WTC11 (cell line): ENCODE measurements at regions of chr14 and their contacts with region 1.

Region 1: GRCh38 chr14:75982266-75983018 is 647 bp upstream of the TGFB3 start:
- DNase-seq: peak; percentile 87
- ATAC-seq: peak; percentile 65
- H3K4me3 Mint-ChIP-seq: peak overlapping the region; percentile 84
- H3K27ac Mint-ChIP-seq: no peak overlapping the region
- H3K4me1 Mint-ChIP-seq: peaks cover 42% of the 10 kb centered on the region
- H3K27me3 Mint-ChIP-seq: peaks cover 39% of the 10 kb centered on the region
- CTCF ChIP-seq: peak; percentile 34; the same call in 1 of the 2 replicates

Region 2: GRCh38 chr14:75660630-75661494 is 321.6 kb before region 1 on chr14 and contains the starts of genes ERG28 and TTLL5:
- CTCF ChIA-PET with region 1: interaction called, 12 read pairs
- POLR2A ChIA-PET with region 1: no interaction called
- DNase-seq: peak; percentile 97
- ATAC-seq: peak; percentile 96
- H3K4me3 Mint-ChIP-seq: peak within 1 kb of the TSS; percentile 92
- H3K27ac Mint-ChIP-seq: peak within 1 kb of the TSS; percentile 95
- H3K4me1 Mint-ChIP-seq: peaks cover 17% of the 10 kb centered on the region
- H3K27me3 Mint-ChIP-seq: no peaks in the 10 kb centered on the region
- CTCF ChIP-seq: no peak
- total RNA-seq, gene ERG28: 27.9 to 29.9 TPM (median 29.4 TPM) in 3 replicates
- total RNA-seq, gene TTLL5: 39.6 to 42.6 TPM (median 40.8 TPM) in 3 replicates

Region 3: GRCh38 chr14:75800792-75801191 is 181.7 kb before region 1 on chr14:
- CTCF ChIA-PET with region 1: interaction called, 28 read pairs
- POLR2A ChIA-PET with region 1: no interaction called
- DNase-seq: peak; percentile 64
- ATAC-seq: peak; percentile 95
- H3K4me3 Mint-ChIP-seq: no peak overlapping the region
- H3K27ac Mint-ChIP-seq: no peak overlapping the region
- H3K4me1 Mint-ChIP-seq: peaks cover 12% of the 10 kb centered on the region
- H3K27me3 Mint-ChIP-seq: no peaks in the 10 kb centered on the region
- CTCF ChIP-seq: 0 out of 2 replicates have a peak, but pooled peaks have one; percentile 21

Region 4: GRCh38 chr14:75884198-75884611 is 98.2 kb before region 1 on chr14:
- CTCF ChIA-PET with region 1: interaction called, 12 read pairs
- POLR2A ChIA-PET with region 1: no interaction called
- DNase-seq: no peak
- ATAC-seq: peak; percentile 69
- H3K4me3 Mint-ChIP-seq: no peak overlapping the region
- H3K27ac Mint-ChIP-seq: 0 out of 2 replicates have a peak overlapping the region, but pooled peaks have one; percentile 35
- H3K4me1 Mint-ChIP-seq: peaks cover 21% of the 10 kb centered on the region
- H3K27me3 Mint-ChIP-seq: no peaks in the 10 kb centered on the region
- CTCF ChIP-seq: no peak

Region 5: DNA sequence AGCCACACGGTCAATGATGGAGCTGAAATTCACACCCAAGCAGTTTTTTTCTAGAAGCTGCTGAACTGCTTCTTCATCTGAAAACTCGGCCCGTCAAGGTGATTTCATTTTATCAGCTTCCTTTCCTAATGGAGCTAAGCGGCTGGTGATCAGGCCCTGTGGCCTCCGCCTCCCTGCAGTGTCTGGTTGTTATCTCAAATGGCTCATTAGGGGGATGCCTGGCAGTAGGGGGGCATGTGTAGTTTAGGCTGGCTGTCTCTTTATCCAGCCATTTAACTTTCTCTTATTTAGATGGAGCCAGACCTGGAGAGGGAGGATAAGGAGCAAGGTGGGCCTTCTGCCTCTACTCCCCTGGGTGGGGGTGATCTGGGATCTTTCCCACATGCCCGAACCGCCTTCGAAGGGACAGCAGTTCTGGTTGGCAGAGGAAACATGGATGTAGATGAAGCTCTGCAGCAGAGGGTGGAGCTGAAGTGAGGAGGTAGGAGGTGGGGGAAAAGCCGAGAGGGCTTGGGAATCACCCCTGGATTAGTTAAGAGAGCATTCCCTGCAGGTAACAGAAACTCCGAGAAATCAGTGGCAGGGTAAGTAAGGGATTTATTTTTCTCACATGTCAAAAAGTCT is 65.0 kb before region 1 on chr14:
- CTCF ChIA-PET with region 1: interaction called, 307 read pairs
- POLR2A ChIA-PET with region 1: no interaction called
- DNase-seq: no peak
- ATAC-seq: peak; percentile 89
- H3K4me3 Mint-ChIP-seq: no peak overlapping the region
- H3K27ac Mint-ChIP-seq: peak overlapping the region; percentile 22; the same call in 1 of the 2 replicates
- H3K4me1 Mint-ChIP-seq: peaks cover 20% of the 10 kb centered on the region
- H3K27me3 Mint-ChIP-seq: no peaks in the 10 kb centered on the region; the same call in 1 of the 2 replicates
- CTCF ChIP-seq: no peak